ENCODE measurements at regions of chr15 and their contacts with region 1.

Region 1: DNA sequence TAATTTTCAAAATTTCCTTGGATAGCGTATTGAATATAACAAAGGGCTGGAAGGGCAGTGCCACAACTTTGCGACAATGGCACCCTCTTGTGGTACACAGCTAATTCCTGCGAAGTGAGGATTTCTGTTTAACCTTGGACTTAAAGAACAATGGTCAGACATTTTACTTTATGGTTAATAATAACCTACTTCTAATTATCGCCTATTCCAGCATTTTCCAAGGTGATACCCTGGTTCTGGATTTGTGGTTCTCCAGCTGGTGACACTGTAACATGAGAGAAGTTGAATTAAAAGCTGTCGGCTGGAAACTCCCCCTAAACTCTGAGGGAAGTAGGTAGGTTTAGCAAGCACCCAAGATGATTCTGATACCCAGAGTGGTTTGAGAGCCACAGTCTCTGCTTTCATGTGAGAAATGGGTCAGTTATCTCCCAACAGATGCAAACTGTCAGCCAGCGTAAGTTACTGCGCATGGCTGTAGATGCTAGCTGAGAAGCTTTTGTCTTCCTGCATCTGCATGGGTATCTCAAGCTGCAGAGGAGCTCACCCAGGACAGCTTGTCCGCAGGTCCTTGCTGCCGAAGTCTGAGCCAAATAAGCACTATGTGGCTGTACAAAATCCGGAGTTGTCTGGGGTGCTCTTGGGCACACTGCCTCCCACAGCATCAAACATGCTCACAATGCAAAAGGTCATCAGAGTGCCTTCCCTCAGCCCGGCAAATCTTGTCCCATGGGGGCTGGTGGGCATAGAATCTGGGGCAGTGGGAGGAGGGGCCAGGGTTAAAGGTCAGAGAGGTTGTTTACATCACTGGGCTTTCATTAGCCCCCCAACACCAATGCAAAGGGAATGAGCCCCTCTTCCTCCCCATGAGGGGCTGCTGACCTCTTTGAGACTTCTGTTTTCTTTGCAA is 6.6 kb upstream of the CHSY1 start:
- DNase-seq: no peak
- H3K4me3 ChIP-seq: no peak overlapping the region
- H3K27ac ChIP-seq: no peak overlapping the region
- H3K4me1 ChIP-seq: no peaks in the 10 kb centered on the region
- H3K27me3 ChIP-seq: no peaks in the 10 kb centered on the region
- CTCF ChIP-seq: peak; percentile 74 to 84 (median 77)

Region 2: DNA sequence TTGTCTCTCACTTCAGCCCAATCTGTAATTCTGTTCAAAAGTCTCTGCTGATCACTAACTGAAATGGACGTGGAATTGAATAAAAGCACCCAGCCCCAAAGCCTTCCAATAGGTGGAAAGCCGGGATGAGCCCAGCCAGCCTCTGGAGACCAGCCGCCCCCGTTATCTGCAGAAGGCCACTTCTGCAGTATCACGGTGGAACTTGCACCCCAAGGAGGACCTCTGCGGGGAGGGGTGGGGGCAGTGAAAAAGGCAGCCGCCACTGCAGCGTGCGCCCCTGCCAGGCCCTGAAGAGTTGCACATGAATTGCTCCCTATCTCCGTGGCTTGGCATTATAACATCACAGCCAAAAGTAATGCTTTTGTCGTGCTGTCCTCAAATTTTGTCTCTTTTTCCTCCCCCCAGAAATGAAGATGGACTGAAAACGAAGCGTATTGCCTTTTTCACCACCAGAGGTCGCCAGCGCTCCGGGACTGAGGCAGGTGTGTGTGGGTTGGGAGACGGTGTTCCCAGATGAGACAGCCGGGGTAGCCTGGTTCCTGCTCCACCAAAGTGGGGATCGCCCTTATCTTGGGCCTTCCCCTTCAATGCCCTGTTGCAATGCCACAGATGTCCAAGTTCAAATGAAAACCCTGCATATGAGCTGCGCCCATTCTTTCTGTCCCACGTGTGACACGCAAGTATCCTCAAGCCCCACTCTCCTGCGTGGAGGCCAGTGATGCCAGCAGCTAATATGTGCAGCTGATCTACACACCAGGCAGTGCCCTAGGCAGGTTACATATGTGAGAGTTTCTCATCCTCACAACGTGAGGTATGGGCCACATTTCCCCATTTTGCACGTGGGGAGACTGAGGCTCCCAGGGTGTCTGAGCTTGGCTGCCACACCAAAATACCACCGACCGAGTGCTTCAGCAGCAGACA is 243.3 kb before region 1 on chr15:
- intact Hi-C with region 1: loop called (anchors 1 kb)
- DNase-seq: peak in 1 of 2 donors; percentile 81
- H3K4me3 ChIP-seq: no peak overlapping the region
- H3K27ac ChIP-seq: no peak overlapping the region
- H3K4me1 ChIP-seq: no peaks in the 10 kb centered on the region
- H3K27me3 ChIP-seq: no peaks in the 10 kb centered on the region
- CTCF ChIP-seq: peak; percentile 62 to 90 (median 75)

Region 3: DNA sequence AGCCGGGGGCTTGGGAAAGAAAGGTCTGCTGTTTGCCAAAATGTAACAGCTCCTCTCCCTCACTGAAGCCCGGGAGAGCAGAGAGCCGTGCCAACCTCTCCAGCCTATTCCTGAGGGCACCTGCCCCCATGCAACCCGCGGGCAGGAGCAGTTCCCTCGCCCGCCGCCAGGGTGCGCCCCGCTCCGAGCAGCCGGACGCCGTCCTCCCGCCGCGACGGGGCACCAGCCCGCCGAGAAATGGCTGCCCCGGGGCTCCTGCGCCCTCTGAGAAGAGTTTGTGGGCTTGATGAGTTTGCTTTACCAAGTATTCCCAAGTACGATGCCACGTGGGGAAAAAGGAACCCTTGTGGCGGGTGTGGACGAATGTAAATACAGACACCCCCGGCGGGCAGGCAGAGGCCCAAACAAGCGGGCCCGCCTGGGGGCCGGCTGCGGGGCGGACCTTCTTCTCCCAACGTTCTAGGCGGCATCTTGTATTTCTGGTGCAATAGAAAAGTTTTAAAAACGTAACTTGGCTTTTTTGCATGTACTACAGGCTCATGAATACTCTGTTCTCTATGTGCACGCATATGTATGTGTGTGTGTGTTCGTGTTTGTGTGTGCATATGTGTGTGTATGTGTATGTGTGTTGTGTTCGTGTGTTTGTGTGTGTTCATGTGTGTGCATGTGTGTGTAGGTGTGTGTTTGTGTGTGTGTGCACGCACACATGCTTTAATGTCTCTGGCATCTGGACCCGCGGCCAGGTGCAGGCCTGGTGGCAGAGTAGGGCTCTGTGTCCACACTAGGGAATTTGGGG is 169.5 kb before region 1 on chr15:
- intact Hi-C with region 1: loop called (anchors 1 kb)
- DNase-seq: peak in 1 of 2 donors; percentile 83
- H3K4me3 ChIP-seq: peak overlapping the region; percentile 31 to 57
- H3K27ac ChIP-seq: peak overlapping the region in 1 of 2 donors; percentile 34
- H3K4me1 ChIP-seq: peaks cover 0 to 10% of the 10 kb centered on the region in 2 donors
- H3K27me3 ChIP-seq: no peaks in the 10 kb centered on the region
- CTCF ChIP-seq: peak; percentile 99 to 100 (median 100)

Region 4: GRCh38 chr15:101358895-101359294 is 100.4 kb after region 1 on chr15:
- intact Hi-C with region 1: no loop called
- DNase-seq: no peak
- H3K4me3 ChIP-seq: no peak overlapping the region
- H3K27ac ChIP-seq: no peak overlapping the region
- H3K4me1 ChIP-seq: no peaks in the 10 kb centered on the region
- H3K27me3 ChIP-seq: no peaks in the 10 kb centered on the region
- CTCF ChIP-seq: no peak

Measured in ascending aorta (tissue), 2 donors.